Panc1 (cell line): ENCODE measurements at regions of chr1 and their contacts with region 1.

Region 1: DNA sequence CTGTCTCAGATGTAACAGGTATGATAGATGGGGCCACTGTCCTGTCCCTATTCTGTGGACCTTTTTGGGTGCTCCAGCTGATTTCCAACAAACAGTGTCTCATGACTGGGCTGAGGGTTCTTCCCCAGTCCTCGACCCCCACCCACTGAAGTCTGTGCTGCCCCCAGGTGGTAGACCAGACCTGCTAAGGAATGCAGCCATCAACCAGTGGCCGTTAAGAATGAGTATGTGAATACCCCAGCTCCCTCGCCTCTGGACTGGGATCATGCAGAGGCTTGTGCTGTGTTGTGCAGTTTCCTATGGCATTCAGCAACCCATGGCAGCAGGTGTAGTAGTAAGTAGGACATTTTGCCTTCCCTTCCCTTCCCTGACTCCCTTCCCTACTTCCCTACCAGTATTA is 183.1 kb upstream of the KAZN start:
- DNase-seq: no peak
- ATAC-seq: no peak
- H3K4me3 ChIP-seq: no peak overlapping the region
- H3K27ac ChIP-seq: no peak overlapping the region
- H3K4me1 ChIP-seq: no peaks in the 10 kb centered on the region
- H3K27me3 ChIP-seq: 0 out of 2 replicates have a peak, but pooled peaks cover 2% of the 10 kb centered on the region
- CTCF ChIP-seq: peak; percentile 20; the same call in 1 of the 2 replicates

Region 2: DNA sequence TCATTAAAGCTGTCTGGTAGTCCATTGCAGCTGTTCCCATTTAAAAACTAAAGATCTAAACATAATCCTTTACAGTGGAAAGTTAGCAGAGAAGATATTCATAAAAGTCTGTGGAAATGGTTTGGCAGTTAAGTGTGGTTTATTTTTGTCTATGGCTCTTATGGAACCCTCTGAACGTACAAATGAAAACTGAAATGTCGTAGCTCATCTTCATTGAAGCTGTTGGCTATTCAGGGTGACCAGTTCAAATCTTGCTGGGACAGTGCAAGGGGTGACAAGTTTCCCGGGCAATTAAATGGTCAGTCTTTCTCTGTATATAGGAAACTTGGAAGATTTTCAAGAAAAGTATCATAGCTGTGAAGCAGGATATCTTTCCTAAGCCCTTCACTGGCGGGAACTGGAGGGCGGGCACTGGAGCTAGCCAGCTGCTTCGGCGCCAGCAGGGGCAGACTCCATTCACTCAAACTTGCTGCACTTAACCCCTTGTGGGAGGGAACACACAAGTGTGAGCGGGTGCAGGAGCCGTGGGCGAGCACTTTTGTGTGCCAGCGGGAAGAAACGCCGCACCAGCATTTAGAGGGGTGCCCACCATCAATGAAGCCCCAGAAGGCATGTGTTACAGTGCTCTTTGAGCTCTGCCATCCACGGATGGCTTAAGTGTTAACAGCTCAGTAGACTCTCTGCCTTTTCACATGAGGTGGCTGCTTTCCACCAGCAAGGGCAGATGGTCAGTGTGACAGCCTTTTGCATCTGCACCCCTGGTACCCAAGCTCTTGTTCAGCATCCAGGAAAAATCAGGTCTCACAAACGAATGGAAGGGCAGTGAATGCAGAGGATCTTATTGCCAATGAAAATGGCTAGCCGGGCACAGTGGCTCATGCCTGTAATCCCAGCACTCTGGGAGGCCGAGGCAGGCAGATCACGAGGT is 49.0 kb before region 1 on chr1:
- CTCF ChIA-PET with region 1: no interaction called
- POLR2A ChIA-PET with region 1: no interaction called
- in situ Hi-C with region 1: no loop called
- intact Hi-C with region 1: no loop called
- DNase-seq: no peak
- ATAC-seq: no peak
- H3K4me3 ChIP-seq: no peak overlapping the region
- H3K27ac ChIP-seq: no peak overlapping the region
- H3K4me1 ChIP-seq: no peaks in the 10 kb centered on the region
- H3K27me3 ChIP-seq: 0 out of 2 replicates have a peak, but pooled peaks cover 2% of the 10 kb centered on the region
- CTCF ChIP-seq: no peak

Region 3: GRCh38 chr1:14465996-14466395 is 50.6 kb after region 1 on chr1:
- CTCF ChIA-PET with region 1: no interaction called
- POLR2A ChIA-PET with region 1: no interaction called
- in situ Hi-C with region 1: no loop called
- intact Hi-C with region 1: loop called (anchors 5 kb)
- DNase-seq: no peak
- ATAC-seq: no peak
- H3K4me3 ChIP-seq: no peak overlapping the region
- H3K27ac ChIP-seq: no peak overlapping the region
- H3K4me1 ChIP-seq: no peaks in the 10 kb centered on the region
- H3K27me3 ChIP-seq: no peaks in the 10 kb centered on the region; the same call in 1 of the 2 replicates
- CTCF ChIP-seq: no peak

Region 4: GRCh38 chr1:15417365-15417934 is 1002.1 kb after region 1 on chr1:
- CTCF ChIA-PET with region 1: no interaction called
- POLR2A ChIA-PET with region 1: no interaction called
- in situ Hi-C with region 1: no loop called
- intact Hi-C with region 1: no loop called
- DNase-seq: no peak
- ATAC-seq: peak; percentile 70
- H3K4me3 ChIP-seq: peak overlapping the region in 1 of 2 experiments; percentile 8; a peak in 1 of 4 replicates
- H3K27ac ChIP-seq: peak overlapping the region; percentile 76
- H3K4me1 ChIP-seq: peaks cover 58% of the 10 kb centered on the region
- H3K27me3 ChIP-seq: no peaks in the 10 kb centered on the region
- CTCF ChIP-seq: no peak